Sciatic nerve (tissue), 2 donors: ENCODE measurements at regions of chr3 and their contacts with region 1.

Region 1: GRCh38 chr3:53195602-53196574 is 34.9 kb downstream of the PRKCD start:
- DNase-seq: peak; percentile 78
- ATAC-seq: peak; percentile 76

Region 2: GRCh38 chr3:53114011-53114400 is 81.9 kb before region 1 on chr3:
- intact Hi-C with region 1: loop called (anchors 5 kb)
- DNase-seq: peak; percentile 91
- ATAC-seq: peak; percentile 84

Region 3: GRCh38 chr3:54356261-54357045 is 1160.6 kb after region 1 on chr3:
- intact Hi-C with region 1: loop called (anchors 10 kb)
- DNase-seq: no peak
- ATAC-seq: no peak